Right ventricle myocardium superior (tissue), 1 donor: ENCODE measurements at regions of chr13 and their contacts with region 1.

Region 1: GRCh38 chr13:79681069-79681468 is 200.1 kb downstream of the NDFIP2 start:
- DNase-seq: no peak
- ATAC-seq: no peak

Region 2: DNA sequence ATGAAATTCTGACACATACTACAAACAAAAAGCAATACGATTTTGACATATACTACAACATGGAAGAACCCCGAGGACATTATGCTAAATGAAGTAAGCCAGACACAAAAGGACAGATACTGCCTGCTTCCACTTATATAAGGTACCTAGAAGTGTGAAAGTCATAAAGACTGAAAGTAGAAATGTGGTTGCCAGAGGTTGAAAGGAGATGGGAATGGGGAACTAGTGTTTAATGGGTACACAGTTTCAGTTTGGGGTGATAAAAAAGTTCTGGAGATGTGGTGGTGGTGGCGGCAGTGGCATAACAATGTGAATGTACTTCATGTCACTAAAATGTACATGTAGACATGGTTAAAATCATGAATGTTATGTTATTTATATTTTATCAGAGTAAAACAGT is 212.2 kb before region 1 on chr13:
- intact Hi-C with region 1: no loop called
- DNase-seq: no peak
- ATAC-seq: no peak

Region 3: DNA sequence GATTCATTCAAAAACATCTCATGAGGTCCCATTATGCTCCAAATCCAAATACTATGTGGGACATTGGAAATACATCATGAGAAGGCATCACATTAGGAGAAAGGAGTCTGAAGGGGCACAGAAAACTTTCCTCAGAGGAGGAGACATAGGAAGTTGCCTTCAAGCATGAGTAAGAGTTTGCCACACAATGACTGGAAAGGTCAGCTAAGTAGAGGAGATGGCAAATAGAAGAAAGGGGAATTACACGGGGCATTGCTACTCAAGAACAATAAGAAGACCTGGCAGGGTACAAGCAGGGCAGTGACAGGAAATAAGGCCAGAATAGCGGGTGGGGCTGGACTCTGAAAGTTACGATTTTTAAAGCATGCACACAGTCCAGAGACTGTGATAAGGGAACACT is 428.2 kb after region 1 on chr13:
- intact Hi-C with region 1: no loop called
- DNase-seq: no peak
- ATAC-seq: no peak

Region 4: DNA sequence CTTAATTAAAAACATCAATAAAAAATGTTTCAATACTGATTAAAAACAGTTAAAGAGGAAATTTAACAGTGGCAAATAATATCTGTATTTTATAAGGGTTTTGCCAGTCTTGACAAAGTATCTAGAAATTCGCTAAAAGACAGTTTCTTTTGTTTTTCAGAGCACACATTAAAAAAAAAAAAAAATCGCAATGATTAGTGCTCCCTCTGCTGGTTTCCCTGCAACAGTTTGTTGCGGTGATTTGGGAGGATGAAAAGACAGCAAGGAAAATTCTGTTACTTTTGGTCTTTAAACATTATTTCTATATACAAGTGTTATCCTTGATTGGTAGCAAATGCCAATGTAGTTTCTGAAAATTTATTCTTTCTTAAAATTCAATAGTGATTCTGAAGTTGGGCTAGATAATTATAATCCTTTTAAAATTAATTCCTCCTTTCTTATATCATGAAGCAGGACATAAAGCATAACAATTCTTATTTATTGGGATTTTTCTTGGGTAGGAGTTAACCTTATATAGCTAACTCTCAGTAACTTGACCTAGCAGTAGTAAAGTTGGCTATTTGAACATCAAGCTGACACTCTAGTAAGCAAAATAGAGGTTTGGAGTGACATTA is 682.9 kb after region 1 on chr13:
- intact Hi-C with region 1: loop called (anchors 10 kb)
- DNase-seq: no peak
- ATAC-seq: no peak